Transverse colon (tissue), 4 donors: ENCODE measurements at regions of chr6 and their contacts with region 1.

Region 1: DNA sequence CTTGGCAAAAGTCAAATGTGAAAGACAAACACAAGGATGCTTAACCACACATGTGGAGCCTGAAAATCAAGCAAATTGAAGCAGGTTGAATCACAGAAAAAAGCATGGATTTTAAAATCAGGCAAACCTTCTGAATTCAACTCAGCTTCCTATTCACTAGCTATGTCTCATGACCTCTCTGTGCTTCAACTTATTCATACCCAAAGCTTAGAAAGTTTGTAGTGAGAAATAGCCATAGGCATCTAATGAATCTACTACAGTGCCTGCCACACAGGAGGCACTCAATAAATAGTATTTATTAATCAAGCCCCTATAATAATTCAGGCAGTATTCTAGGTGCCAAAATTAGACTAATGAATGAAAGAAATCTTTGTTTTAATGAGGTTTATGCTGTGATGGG is 112.2 kb upstream of the TNFAIP3 start:
- DNase-seq: no peak
- H3K4me3 ChIP-seq: no peak overlapping the region
- H3K27ac ChIP-seq: no peak overlapping the region
- H3K4me1 ChIP-seq: peaks cover 0 to 9% (median under 1%) of the 10 kb centered on the region in 4 donors
- H3K27me3 ChIP-seq: no peaks in the 10 kb centered on the region
- CTCF ChIP-seq: no peak
- EP300 ChIP-seq: no peak
- POLR2A ChIP-seq: no peak

Region 2: GRCh38 chr6:137044366-137045249 is 710.3 kb before region 1 on chr6 and contains the start of gene IL20RA:
- in situ Hi-C with region 1: no loop called
- intact Hi-C with region 1: loop called (anchors 5 kb)
- DNase-seq: peak; percentile 35
- H3K4me3 ChIP-seq: peak within 1 kb of the TSS; percentile 63 to 87 (median 74)
- H3K27ac ChIP-seq: peak within 1 kb of the TSS; percentile 59 to 85 (median 82)
- H3K4me1 ChIP-seq: peaks cover 0 to 26% (median 3%) of the 10 kb centered on the region in 4 donors
- H3K27me3 ChIP-seq: peaks cover 37% of the 10 kb centered on the region
- CTCF ChIP-seq: peak in 2 of 5 experiments; percentile 3 to 29
- EP300 ChIP-seq: no peak
- POLR2A ChIP-seq: peak; percentile 1
- total RNA-seq, gene IL20RA: 7.4 to 20.5 (median 11.3) TPM

Region 3: DNA sequence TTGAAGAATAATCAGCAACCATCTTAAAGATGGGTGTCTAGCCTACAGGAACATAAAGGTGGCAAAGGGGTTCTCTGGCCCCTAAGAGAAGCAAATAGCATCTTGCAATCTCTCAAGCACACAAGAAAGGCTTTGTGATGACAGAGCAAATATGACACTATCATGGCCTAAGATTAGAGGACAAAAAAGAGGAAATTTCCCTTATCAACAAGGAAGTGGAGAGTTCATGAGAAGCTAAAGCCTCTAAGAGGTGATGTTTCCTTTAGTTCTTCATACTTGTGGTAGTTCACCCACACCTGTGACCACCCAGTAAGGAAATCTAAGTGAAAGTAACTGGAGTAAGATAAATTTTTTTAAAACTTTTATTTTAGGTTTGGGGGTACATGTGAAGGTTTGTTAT is 349.1 kb before region 1 on chr6:
- in situ Hi-C with region 1: no loop called
- intact Hi-C with region 1: loop called (anchors 5 kb)
- DNase-seq: no peak
- H3K4me3 ChIP-seq: no peak overlapping the region
- H3K27ac ChIP-seq: no peak overlapping the region
- H3K4me1 ChIP-seq: peaks cover 0 to 3% (median 0%) of the 10 kb centered on the region in 4 donors
- H3K27me3 ChIP-seq: no peaks in the 10 kb centered on the region
- CTCF ChIP-seq: no peak
- EP300 ChIP-seq: no peak
- POLR2A ChIP-seq: no peak

Region 4: GRCh38 chr6:137512757-137513605 is 241.9 kb before region 1 on chr6:
- in situ Hi-C with region 1: no loop called
- intact Hi-C with region 1: no loop called
- DNase-seq: no peak
- H3K4me3 ChIP-seq: no peak overlapping the region
- H3K27ac ChIP-seq: no peak overlapping the region
- H3K4me1 ChIP-seq: no peaks in the 10 kb centered on the region
- H3K27me3 ChIP-seq: peaks cover 99% of the 10 kb centered on the region
- CTCF ChIP-seq: no peak
- EP300 ChIP-seq: no peak
- POLR2A ChIP-seq: no peak

Region 5: GRCh38 chr6:137921823-137922222 is 167.0 kb after region 1 on chr6:
- in situ Hi-C with region 1: no loop called
- intact Hi-C with region 1: no loop called
- DNase-seq: no peak
- H3K4me3 ChIP-seq: no peak overlapping the region
- H3K27ac ChIP-seq: no peak overlapping the region
- H3K4me1 ChIP-seq: peaks cover 0 to 6% (median 2%) of the 10 kb centered on the region in 4 donors
- H3K27me3 ChIP-seq: no peaks in the 10 kb centered on the region
- CTCF ChIP-seq: no peak
- EP300 ChIP-seq: no peak
- POLR2A ChIP-seq: no peak

Region 6: GRCh38 chr6:137975188-137975940 is 220.5 kb after region 1 on chr6:
- in situ Hi-C with region 1: no loop called
- intact Hi-C with region 1: no loop called
- DNase-seq: no peak
- H3K4me3 ChIP-seq: no peak overlapping the region
- H3K27ac ChIP-seq: peak overlapping the region in 3 of 4 donors; percentile 11 to 26 (median 25)
- H3K4me1 ChIP-seq: peaks cover 0 to 5% (median 1%) of the 10 kb centered on the region in 4 donors
- H3K27me3 ChIP-seq: no peaks in the 10 kb centered on the region
- CTCF ChIP-seq: peak in 2 of 5 experiments; percentile 11 to 21
- EP300 ChIP-seq: no peak
- POLR2A ChIP-seq: no peak

Region 7: GRCh38 chr6:138012682-138013081 is 257.8 kb after region 1 on chr6:
- in situ Hi-C with region 1: no loop called
- intact Hi-C with region 1: no loop called
- DNase-seq: peak; percentile 23
- H3K4me3 ChIP-seq: no peak overlapping the region
- H3K27ac ChIP-seq: no peak overlapping the region
- H3K4me1 ChIP-seq: peaks cover 0 to 10% (median 0%) of the 10 kb centered on the region in 4 donors
- H3K27me3 ChIP-seq: no peaks in the 10 kb centered on the region
- CTCF ChIP-seq: no peak
- EP300 ChIP-seq: no peak
- POLR2A ChIP-seq: no peak